ENCODE measurements at regions of chr20 and their contacts with region 1.

Region 1: GRCh38 chr20:3964719-3965118 is 50.6 kb downstream of the RNF24 start:
- DNase-seq: no peak
- H3K4me3 ChIP-seq: no peak overlapping the region
- H3K27ac ChIP-seq: no peak overlapping the region
- H3K4me1 ChIP-seq: no peaks in the 10 kb centered on the region
- H3K27me3 ChIP-seq: no peaks in the 10 kb centered on the region
- CTCF ChIP-seq: no peak
- POLR2A ChIP-seq: no peak

Region 2: DNA sequence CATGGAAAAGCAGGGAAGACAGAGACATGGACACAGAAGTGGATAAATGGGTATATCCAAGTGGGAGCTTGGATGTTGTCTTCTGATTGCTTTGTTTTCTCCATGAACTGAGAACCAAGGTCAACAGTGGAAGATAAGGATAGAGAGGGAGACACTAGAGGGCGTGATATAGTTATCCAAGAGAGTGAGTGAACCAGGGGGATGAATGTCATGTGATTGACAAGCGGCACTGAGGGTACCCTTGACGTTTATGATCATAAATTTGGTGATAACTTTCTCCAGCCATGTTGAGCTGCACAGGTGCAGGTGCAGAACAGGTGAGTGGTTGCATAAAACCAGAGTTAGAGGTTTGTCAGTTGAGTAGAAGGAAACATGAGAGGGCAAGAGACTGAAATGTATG is 1251.4 kb before region 1 on chr20:
- intact Hi-C with region 1: loop called in 1 of 2 experiments (anchors 10 kb)
- DNase-seq: no peak
- H3K4me3 ChIP-seq: no peak overlapping the region
- H3K27ac ChIP-seq: no peak overlapping the region
- H3K4me1 ChIP-seq: no peaks in the 10 kb centered on the region
- H3K27me3 ChIP-seq: no peaks in the 10 kb centered on the region
- CTCF ChIP-seq: no peak
- POLR2A ChIP-seq: no peak

Measured in adrenal gland (tissue), 19 donors.